Dendritic cell treated with granulocyte-macrophage colony-stimulating factor and Interleukin-4, amounts not matched to agents 40 ng/mL and 50 ng/mL, for 4 days (primary cell): ENCODE measurements at regions of chr7 and their contacts with region 1.

Region 1: DNA sequence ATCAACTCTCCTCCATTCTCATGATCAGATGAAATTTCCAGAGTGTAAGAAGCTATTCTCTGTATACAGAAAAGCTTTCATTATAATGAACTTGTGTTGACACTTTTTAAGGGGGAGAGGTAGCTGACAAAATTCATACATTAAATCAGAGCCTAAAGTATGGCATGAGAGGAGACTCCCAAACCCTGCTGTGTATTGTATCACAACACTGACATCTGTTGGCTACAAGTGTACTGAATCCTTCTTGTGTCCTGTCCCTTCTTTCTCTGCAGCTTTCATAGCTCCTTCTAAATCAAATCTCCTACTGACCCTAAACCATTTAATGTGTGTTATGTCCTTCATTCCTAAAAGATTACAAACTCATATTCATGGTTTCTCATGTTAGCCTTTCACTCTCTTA is 70.9 kb downstream of the GCC1 start:
- H3K4me3 Mint-ChIP-seq: no peak overlapping the region
- H3K27ac Mint-ChIP-seq: no peak overlapping the region
- H3K4me1 Mint-ChIP-seq: no peaks in the 10 kb centered on the region
- H3K27me3 Mint-ChIP-seq: peaks cover 39% of the 10 kb centered on the region

Region 2: GRCh38 chr7:126856691-126857291 is 657.7 kb before region 1 on chr7:
- intact Hi-C with region 1: loop called (anchors 5 kb)
- H3K4me3 Mint-ChIP-seq: no peak overlapping the region
- H3K27ac Mint-ChIP-seq: no peak overlapping the region
- H3K4me1 Mint-ChIP-seq: no peaks in the 10 kb centered on the region
- H3K27me3 Mint-ChIP-seq: peaks cover 1% of the 10 kb centered on the region

Region 3: GRCh38 chr7:127347567-127348246 is 166.8 kb before region 1 on chr7:
- intact Hi-C with region 1: loop called (anchors 5 kb)
- H3K4me3 Mint-ChIP-seq: peak overlapping the region; percentile 54
- H3K27ac Mint-ChIP-seq: no peak overlapping the region
- H3K4me1 Mint-ChIP-seq: no peaks in the 10 kb centered on the region
- H3K27me3 Mint-ChIP-seq: peaks cover 31% of the 10 kb centered on the region

Region 4: DNA sequence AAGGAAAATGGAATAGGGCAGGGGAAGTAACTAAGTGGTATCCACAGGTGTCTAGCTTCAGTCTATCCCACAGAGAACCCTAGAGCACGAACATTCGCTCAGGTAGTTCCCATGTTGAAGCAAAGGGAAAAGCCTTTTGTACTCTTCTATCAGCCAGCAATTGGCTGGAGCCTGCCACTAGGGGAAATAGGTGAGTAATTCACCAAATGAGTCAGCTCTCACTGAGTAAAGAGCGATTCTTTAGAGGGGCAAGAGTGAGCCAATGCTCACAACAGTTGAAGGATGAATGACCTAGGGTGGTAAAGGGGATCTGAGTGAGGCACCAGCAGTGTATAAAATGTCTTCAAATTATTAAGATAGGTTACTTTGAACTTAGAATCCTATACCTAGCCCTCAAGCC is 27.8 kb before region 1 on chr7:
- intact Hi-C with region 1: no loop called
- H3K4me3 Mint-ChIP-seq: no peak overlapping the region
- H3K27ac Mint-ChIP-seq: no peak overlapping the region
- H3K4me1 Mint-ChIP-seq: peaks cover 5% of the 10 kb centered on the region
- H3K27me3 Mint-ChIP-seq: peaks cover 16% of the 10 kb centered on the region